GM13976 (cell line): ENCODE measurements at regions of chr11 and their contacts with region 1.

Region 1: GRCh38 chr11:59501931-59502330 is 1.4 kb upstream of the OR4D11 start:
- DNase-seq: no peak
- CTCF ChIP-seq: no peak

Region 2: GRCh38 chr11:59448484-59448883 is 53.4 kb before region 1 on chr11:
- in situ Hi-C with region 1: loop called (anchors 10 kb)
- DNase-seq: no peak
- CTCF ChIP-seq: no peak

Region 3: DNA sequence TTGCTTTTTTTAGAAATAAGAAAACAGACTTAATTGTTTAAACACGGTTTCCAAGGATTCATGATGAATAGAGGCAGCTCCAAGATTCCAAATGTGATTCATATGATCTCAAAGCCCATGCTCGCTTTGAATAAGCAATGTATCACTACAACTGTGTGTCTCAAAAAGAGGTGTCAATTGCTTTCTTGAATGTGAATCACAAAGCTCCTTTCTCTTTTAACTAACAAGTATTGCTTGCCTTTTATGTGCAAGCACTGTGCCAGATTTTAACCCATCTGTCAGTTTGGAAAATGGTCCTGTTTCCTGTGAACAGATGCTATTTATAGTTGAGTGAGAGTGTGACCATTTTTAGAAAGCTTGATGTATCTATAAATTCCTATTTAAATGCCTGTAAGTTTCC is 442.8 kb after region 1 on chr11:
- in situ Hi-C with region 1: no loop called
- DNase-seq: no peak
- CTCF ChIP-seq: no peak